Posterior vena cava (tissue), 2 donors: ENCODE measurements at regions of chr11 and their contacts with region 1.

Region 1: GRCh38 chr11:35363854-35364780 is 55.2 kb downstream of the SLC1A2 start:
- DNase-seq: peak; percentile 90

Region 2: DNA sequence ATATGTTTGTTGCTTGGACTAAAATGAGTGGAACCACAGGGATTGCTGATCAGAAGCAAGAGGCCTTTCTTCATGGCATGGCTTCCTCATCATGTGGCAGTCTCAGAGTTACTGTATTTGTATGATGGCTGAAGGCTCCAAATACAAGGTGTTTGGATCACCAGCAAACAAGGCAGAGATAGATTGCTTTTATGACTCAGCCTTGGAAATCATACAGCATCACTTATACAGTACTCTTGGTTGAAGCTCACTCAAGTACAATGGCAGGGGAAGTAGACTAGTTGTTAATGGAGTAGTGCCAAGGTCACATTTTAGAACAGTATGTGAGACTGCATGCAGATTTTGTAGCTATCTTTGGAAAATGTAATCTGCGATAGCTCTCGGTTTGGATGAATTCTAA is 1296.0 kb before region 1 on chr11:
- intact Hi-C with region 1: loop called in 1 of 2 experiments (anchors 10 kb)
- DNase-seq: no peak

Region 3: GRCh38 chr11:35173011-35173511 is 191.1 kb before region 1 on chr11:
- intact Hi-C with region 1: loop called in 1 of 2 experiments (anchors 10 kb)
- DNase-seq: no peak

Region 4: GRCh38 chr11:35282226-35282882 is 81.8 kb before region 1 on chr11:
- intact Hi-C with region 1: loop called in 1 of 2 experiments (anchors 5 kb)
- DNase-seq: no peak

Region 5: DNA sequence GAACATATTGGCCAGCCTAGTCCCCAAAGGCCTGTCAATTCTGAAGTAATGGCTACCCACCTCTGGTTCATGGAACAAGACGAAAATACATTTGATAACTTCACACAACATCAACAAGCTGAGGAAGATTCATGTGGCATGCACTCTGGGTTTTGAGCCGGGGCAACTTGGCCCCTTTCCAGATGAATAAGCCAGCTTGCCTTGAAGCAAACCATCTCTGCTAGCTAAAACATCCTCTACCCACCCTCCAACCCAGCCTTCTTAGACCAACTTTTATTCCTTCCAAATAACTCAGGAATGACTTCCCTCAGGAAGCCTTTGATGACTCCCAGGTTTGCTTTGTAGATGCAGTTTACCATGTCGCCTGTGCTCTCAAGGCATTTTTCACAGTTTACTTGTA is 39.1 kb before region 1 on chr11:
- intact Hi-C with region 1: loop called in 1 of 2 experiments (anchors 1 kb)
- DNase-seq: no peak